WTC11 (cell line): ENCODE measurements at regions of chr1 and their contacts with region 1.

Region 1: DNA sequence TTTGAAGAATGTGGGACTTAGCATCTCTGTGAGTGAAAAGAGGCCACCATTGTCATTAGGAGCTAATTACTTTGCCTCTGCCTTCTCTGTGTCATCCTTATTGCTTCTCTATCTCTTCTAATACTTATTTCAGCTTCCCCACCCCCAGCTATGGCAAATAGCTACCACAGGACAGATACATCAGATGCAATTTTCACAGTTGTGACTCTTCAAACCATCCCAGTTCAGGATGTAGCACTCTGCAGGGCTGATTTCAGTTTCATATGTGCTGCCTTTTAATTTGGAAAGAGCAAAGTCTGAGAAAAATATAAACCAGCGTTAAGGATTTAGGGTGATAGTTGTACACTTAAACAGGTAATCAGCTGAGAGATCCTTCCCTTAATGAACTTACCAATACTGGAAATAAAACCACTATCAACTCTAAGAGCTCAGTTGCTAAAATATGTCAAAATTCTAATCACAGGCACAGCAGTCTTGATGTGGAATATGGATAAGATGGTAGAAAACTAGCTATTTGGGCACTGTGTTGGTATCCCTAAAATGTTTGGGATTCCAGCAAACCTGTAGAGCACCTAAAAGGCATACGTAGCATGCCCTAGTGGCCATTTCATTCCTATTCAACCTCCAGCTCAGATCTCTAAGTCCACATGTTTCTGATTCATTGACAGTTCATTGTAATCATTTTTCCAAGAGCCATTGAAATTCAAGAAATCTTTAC is 148.4 kb downstream of the SYT2 start:
- DNase-seq: no peak
- ATAC-seq: peak; percentile 87
- H3K4me3 Mint-ChIP-seq: no peak overlapping the region
- H3K27ac Mint-ChIP-seq: peak overlapping the region; percentile 4; the same call in 1 of the 2 replicates
- H3K4me1 Mint-ChIP-seq: peaks cover 39% of the 10 kb centered on the region
- H3K27me3 Mint-ChIP-seq: no peaks in the 10 kb centered on the region
- CTCF ChIP-seq: no peak

Region 2: DNA sequence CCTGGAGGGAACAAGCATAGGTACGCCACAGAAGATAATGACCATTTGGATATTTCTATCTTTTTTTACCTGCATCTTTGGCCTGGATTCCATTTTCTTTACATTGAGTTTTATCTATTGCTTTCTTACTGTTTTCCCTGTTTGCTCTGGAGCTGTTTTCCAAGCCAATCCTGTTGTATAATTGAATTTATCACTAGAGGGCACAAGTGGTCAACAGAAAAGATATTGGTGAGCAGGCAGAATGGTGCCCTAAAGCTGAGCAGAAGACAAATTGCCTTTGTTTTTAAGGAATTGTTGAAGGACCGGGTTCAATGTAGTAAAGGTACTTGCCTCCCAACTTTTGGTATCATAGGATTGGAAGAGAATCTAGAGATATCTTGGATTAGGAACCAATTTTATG is 60.6 kb before region 1 on chr1:
- CTCF ChIA-PET with region 1: interaction called, 15 read pairs
- POLR2A ChIA-PET with region 1: no interaction called
- DNase-seq: no peak
- ATAC-seq: peak; percentile 75
- H3K4me3 Mint-ChIP-seq: no peak overlapping the region
- H3K27ac Mint-ChIP-seq: 0 out of 2 replicates have a peak overlapping the region, but pooled peaks have one; percentile 4
- H3K4me1 Mint-ChIP-seq: peaks cover 7% of the 10 kb centered on the region
- H3K27me3 Mint-ChIP-seq: no peaks in the 10 kb centered on the region
- CTCF ChIP-seq: no peak

Region 3: GRCh38 chr1:202522983-202523382 is 38.9 kb before region 1 on chr1:
- CTCF ChIA-PET with region 1: no interaction called
- POLR2A ChIA-PET with region 1: no interaction called
- DNase-seq: no peak
- ATAC-seq: no peak
- H3K4me3 Mint-ChIP-seq: no peak overlapping the region
- H3K27ac Mint-ChIP-seq: no peak overlapping the region
- H3K4me1 Mint-ChIP-seq: no peaks in the 10 kb centered on the region
- H3K27me3 Mint-ChIP-seq: no peaks in the 10 kb centered on the region
- CTCF ChIP-seq: no peak

Region 4: DNA sequence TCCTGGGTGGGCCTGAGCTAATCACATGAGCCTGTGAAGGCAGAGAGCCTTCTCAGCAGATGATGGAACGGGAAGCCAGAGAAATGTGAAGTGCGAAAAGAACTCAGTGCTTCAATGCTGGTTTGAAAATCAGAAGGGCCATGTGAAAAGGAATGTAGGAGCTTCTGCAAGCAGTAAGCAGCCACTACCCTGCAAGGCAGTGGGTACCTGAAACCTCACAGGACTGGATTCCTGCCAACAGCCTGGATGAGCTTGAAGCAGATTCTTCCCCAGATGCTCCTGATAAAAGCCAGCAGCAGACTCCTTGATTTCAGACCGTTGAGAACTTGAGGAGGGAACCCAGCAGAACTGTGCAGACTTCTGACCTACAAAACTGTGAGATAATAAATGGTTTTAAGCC is 10.2 kb before region 1 on chr1:
- CTCF ChIA-PET with region 1: interaction called, 15 read pairs
- POLR2A ChIA-PET with region 1: no interaction called
- DNase-seq: no peak
- ATAC-seq: no peak
- H3K4me3 Mint-ChIP-seq: no peak overlapping the region
- H3K27ac Mint-ChIP-seq: 0 out of 2 replicates have a peak overlapping the region, but pooled peaks have one; percentile 10
- H3K4me1 Mint-ChIP-seq: peaks cover 12% of the 10 kb centered on the region
- H3K27me3 Mint-ChIP-seq: no peaks in the 10 kb centered on the region
- CTCF ChIP-seq: no peak

Region 5: GRCh38 chr1:202576816-202577215 is 14.9 kb after region 1 on chr1:
- CTCF ChIA-PET with region 1: interaction called, 35 read pairs
- POLR2A ChIA-PET with region 1: no interaction called
- DNase-seq: no peak
- ATAC-seq: no peak
- H3K4me3 Mint-ChIP-seq: no peak overlapping the region
- H3K27ac Mint-ChIP-seq: peak overlapping the region; percentile 37
- H3K4me1 Mint-ChIP-seq: peaks cover 40% of the 10 kb centered on the region
- H3K27me3 Mint-ChIP-seq: no peaks in the 10 kb centered on the region
- CTCF ChIP-seq: no peak

Region 6: DNA sequence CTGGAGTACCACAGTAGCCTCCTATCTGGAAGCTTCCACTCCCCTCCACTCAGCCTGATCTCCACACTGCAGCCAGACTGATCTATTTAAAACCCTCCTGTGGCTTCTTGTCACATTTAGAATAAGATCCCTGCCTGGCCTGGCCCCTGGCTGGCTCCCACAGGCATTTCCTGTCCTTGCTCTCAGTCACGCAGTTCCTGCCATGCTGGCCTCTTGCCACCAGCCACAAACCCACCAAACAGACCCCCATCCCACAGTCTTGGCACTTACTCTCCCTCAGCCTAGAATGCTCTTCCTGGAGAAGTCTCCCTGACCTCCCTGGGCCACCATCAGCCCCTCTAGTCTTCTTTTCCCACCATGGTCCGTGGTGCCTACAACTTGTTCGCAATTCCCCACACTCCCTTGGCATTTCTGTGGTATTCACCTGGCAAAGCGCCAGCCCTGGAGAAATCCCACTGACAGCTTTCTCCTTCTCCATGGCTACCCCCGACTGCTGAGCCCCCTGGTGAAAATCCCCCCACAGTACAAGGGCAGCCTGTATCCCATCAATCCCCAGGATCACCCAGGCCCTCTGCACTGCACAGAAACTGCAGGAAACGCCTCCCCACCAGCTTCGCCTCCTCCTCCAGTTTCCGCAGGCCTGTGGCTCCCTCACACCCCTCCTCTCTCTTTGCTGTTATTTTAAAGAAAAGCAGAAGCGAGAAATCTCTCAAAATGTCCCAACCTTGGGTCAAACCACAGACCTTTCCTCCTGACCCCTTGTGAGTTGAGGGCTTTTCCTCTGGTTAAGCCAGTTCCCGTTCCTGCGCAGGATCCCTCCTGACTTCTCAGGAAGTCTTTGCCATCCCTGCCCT is 53.8 kb after region 1 on chr1:
- CTCF ChIA-PET with region 1: no interaction called
- POLR2A ChIA-PET with region 1: no interaction called
- DNase-seq: no peak
- ATAC-seq: peak; percentile 35
- H3K4me3 Mint-ChIP-seq: no peak overlapping the region
- H3K27ac Mint-ChIP-seq: peak overlapping the region; percentile 10; the same call in 1 of the 2 replicates
- H3K4me1 Mint-ChIP-seq: peaks cover 22% of the 10 kb centered on the region
- H3K27me3 Mint-ChIP-seq: no peaks in the 10 kb centered on the region
- CTCF ChIP-seq: no peak